ENCODE measurements at regions of chr5 and their contacts with region 1.

Region 1: GRCh38 chr5:80255732-80256479 is at the start of gene SERINC5:
- DNase-seq: peak; percentile 93 to 94
- ATAC-seq: peak; percentile 96
- H3K4me3 ChIP-seq: peak within 1 kb of the TSS; percentile 81 to 85
- H3K27ac ChIP-seq: peak within 1 kb of the TSS; percentile 30 to 100
- H3K4me1 ChIP-seq: no peaks in the 10 kb centered on the region
- H3K27me3 ChIP-seq: no peaks in the 10 kb centered on the region
- total RNA-seq, gene SERINC5: 15.5 to 22.1 TPM

Region 2: DNA sequence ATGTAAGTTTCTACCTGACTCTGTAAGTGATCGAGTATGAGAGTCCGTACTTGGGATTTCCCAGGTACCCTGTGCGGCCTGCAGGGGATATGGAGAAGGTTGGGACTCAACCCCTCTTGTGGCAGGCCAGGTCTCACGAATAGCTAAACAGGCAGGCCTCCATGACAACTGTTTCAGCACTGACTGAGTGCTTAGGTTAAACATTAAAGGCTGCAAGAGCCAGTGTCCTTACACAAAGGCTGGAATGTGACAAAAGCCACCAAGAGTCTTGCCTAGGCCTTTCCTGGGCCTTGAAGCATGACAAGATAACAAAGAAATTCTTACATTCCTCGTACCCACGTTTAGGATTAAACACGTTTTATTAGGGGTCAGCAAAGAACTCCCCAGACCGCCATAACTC is 162.1 kb before region 1 on chr5:
- intact Hi-C with region 1: no loop called
- DNase-seq: no peak
- ATAC-seq: no peak
- H3K4me3 ChIP-seq: no peak overlapping the region
- H3K27ac ChIP-seq: no peak overlapping the region
- H3K4me1 ChIP-seq: no peaks in the 10 kb centered on the region
- H3K27me3 ChIP-seq: no peaks in the 10 kb centered on the region

Region 3: GRCh38 chr5:80141147-80141671 is 114.7 kb before region 1 on chr5:
- intact Hi-C with region 1: loop called in 1 of 2 experiments (anchors 5 kb)
- DNase-seq: peak; percentile 81 to 88
- ATAC-seq: peak; percentile 79
- H3K4me3 ChIP-seq: no peak overlapping the region
- H3K27ac ChIP-seq: peak overlapping the region in 1 of 2 donors; percentile 64
- H3K4me1 ChIP-seq: no peaks in the 10 kb centered on the region
- H3K27me3 ChIP-seq: no peaks in the 10 kb centered on the region

Region 4: GRCh38 chr5:80417973-80418372 is 162.1 kb after region 1 on chr5:
- intact Hi-C with region 1: no loop called
- DNase-seq: no peak
- ATAC-seq: no peak
- H3K4me3 ChIP-seq: no peak overlapping the region
- H3K27ac ChIP-seq: no peak overlapping the region
- H3K4me1 ChIP-seq: peaks cover 0 to 2% of the 10 kb centered on the region in 2 donors
- H3K27me3 ChIP-seq: no peaks in the 10 kb centered on the region